ENCODE measurements at regions of chr7 and their contacts with region 1.

Region 1: GRCh38 chr7:25389489-25390106 is 161.3 kb upstream of the NPVF start:
- ATAC-seq: peak; percentile 49 to 72 (median 56)
- H3K4me3 ChIP-seq: no peak overlapping the region
- H3K27ac ChIP-seq: no peak overlapping the region
- H3K4me1 ChIP-seq: peaks cover 0 to 15% of the 10 kb centered on the region in 2 donors

Region 2: GRCh38 chr7:25303281-25304156 is 86.1 kb before region 1 on chr7:
- in situ Hi-C with region 1: loop called in 2 of 9 experiments (anchors 10 kb)
- ATAC-seq: peak in 6 of 8 experiments; percentile 52 to 81 (median 64)
- H3K4me3 ChIP-seq: no peak overlapping the region
- H3K27ac ChIP-seq: no peak overlapping the region
- H3K4me1 ChIP-seq: peaks cover 7 to 12% of the 10 kb centered on the region in 2 donors

Region 3: DNA sequence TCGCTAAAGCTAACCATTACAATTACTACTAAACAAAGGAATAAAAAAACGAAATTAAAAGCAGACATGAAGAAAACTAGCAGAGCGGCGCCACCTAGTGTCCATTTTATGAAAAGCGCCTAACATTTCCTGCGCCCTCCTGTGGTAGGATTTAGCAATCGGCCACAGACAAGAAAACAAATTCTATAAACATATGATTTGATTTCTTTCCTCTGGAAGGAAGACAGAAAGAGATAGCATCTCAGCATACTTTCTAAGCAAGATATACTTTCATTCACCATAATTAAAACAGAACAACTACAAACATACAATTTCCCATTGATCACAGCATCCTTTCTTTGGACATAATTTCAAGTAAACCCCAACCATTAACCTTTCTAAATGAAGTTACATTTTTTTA is 176.4 kb after region 1 on chr7:
- in situ Hi-C with region 1: loop called in 4 of 9 experiments (anchors 10 to 25 kb)
- ATAC-seq: no peak
- H3K4me3 ChIP-seq: no peak overlapping the region
- H3K27ac ChIP-seq: no peak overlapping the region
- H3K4me1 ChIP-seq: peaks cover 0 to 9% of the 10 kb centered on the region in 2 donors

Region 4: DNA sequence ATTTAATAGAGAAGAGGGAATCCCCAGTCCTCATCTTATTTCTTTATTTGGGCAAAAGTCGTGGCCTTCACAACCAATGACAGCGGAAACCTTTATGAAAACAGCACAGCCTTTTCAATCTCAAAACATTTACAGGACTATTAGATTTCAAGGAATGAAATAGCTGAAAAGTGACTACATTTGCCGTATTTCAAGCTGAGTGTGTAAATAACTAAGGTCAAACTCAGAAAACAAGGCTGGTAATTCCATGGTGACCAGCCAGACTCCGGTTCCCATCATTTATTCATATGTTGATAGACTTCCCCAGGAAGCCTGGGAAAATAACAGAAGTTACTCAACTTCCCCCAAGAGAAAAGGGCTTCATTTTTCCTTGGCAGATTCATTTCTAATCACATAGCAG is 305.1 kb after region 1 on chr7:
- in situ Hi-C with region 1: no loop called
- ATAC-seq: peak in 1 of 8 experiments; percentile 21
- H3K4me3 ChIP-seq: no peak overlapping the region
- H3K27ac ChIP-seq: no peak overlapping the region
- H3K4me1 ChIP-seq: peaks cover 0 to 15% of the 10 kb centered on the region in 2 donors

Region 5: DNA sequence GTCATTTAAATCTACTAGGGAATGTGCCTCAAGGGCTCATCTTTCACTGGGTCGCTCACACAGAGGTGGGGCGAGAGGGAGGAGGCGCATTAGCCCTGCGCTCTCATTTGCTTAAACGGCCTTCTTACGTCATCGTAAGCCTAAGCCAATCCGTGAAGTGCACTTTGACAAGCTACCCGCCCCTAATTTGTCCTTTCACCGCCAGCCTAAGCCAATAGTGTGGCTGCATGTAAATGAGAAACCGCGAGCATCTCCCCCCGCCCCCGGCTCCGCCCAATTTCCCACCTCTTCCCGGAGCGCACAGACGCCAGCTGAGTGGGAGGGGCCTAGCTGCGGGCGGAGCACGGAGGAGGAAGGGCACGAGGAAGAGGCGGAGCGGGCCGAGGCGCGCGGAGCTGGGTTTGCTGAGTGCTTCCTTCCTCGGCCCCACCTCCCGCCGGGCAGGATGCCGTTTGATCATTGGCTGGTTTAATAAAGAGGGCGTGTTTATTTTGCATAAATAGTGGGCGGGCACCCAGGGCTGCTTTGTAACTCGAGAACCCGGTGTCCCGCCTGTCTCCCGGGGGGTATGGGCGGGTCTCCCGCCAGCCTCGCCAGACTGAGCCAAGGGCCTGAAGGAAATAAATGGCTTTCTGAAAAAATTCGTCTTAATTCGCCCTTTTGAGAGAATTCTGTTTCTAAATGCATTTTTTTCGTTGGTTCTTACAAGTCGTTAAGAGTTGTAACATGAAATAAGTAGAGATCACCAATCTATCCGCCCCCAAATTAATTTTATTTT is 472.9 kb after region 1 on chr7:
- in situ Hi-C with region 1: loop called in 5 of 9 experiments (anchors 10 to 25 kb)
- ATAC-seq: peak; percentile 86 to 93 (median 92)
- H3K4me3 ChIP-seq: peak overlapping the region; percentile 7 to 25 (median 14)
- H3K27ac ChIP-seq: no peak overlapping the region
- H3K4me1 ChIP-seq: peaks cover 0 to 2% of the 10 kb centered on the region in 2 donors